HEK293 (cell line): ENCODE measurements at regions of chr2 and their contacts with region 1.

Region 1: GRCh38 chr2:112884869-112885505 is 26.0 kb upstream of the IL37 start:
- H3K4me3 ChIP-seq: no peak overlapping the region
- H3K27ac ChIP-seq: no peak overlapping the region
- H3K4me1 ChIP-seq: peaks cover 2% of the 10 kb centered on the region; the same call in 1 of the 2 replicates
- CTCF ChIP-seq: peak; percentile 48

Region 2: DNA sequence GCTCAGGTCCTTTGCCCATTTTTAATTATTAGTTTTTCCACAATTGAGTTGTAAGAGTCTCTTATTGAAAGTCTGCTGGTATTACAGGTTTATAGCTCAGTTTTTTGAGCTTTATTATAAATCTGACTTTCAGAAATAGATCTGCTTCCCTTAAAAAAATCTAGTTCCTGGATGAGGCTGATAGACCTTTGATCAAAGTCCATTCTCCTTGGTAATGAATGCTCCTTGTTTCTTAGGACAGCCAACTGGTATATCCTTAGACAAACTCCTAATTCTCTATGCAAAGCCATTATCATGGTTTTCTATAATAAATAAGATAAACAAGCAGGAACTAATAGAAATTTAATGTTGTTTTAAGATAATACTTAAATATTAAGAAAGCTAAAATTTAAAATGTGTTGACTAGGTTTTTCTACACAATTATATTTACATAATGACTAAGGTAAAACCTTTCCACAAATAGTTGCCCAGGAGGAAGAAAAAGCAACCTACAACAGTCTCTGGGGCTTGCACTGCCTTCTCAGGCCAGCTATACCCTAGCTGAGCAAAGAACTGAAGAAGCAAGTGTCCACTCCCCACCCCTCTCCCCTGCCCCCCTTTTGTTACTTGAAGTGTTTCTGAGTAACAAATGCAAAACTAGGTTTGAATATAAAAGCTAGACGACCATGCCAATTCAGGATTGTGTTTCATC is 147.3 kb before region 1 on chr2:
- CTCF ChIA-PET with region 1: interaction called, 15 read pairs
- POLR2A ChIA-PET with region 1: no interaction called
- H3K4me3 ChIP-seq: no peak overlapping the region
- H3K27ac ChIP-seq: no peak overlapping the region
- H3K4me1 ChIP-seq: no peaks in the 10 kb centered on the region
- CTCF ChIP-seq: no peak

Region 3: DNA sequence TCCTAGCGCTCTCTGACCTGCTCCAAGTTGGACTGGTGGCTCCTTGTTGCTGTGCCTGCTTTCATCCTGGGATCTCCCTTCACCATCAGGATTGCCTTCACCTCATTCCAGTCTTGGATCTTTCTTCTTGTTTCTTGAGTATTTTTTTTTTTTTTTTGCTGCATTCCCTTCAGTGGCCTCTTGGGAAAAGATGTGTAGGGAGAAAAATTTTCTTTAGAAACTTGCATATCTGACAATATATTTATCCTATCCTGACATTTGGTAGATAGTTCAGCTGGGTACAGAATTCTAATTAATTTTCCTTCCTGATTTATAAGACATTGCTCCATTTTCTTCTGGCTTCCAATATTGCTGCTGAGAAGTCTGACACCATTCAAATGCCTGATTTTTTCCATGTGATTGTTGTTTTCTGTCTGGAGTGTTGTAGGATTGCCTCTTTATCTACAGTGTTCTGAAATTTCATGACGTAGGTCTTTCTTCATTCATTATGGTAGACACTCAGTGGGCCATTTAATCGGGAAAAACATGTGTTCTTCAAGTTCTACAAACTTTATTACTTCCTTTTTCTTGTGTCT is 77.7 kb before region 1 on chr2:
- CTCF ChIA-PET with region 1: no interaction called
- POLR2A ChIA-PET with region 1: no interaction called
- H3K4me3 ChIP-seq: no peak overlapping the region
- H3K27ac ChIP-seq: no peak overlapping the region
- H3K4me1 ChIP-seq: no peaks in the 10 kb centered on the region
- CTCF ChIP-seq: no peak

Region 4: GRCh38 chr2:112869258-112869885 is 15.6 kb before region 1 on chr2:
- CTCF ChIA-PET with region 1: interaction called, 14 read pairs
- POLR2A ChIA-PET with region 1: no interaction called
- H3K4me3 ChIP-seq: no peak overlapping the region
- H3K27ac ChIP-seq: peak overlapping the region; percentile 43; the same call in 1 of the 2 replicates
- H3K4me1 ChIP-seq: peaks cover 11% of the 10 kb centered on the region
- CTCF ChIP-seq: no peak

Region 5: GRCh38 chr2:112902816-112903215 is 17.8 kb after region 1 on chr2:
- CTCF ChIA-PET with region 1: interaction called, 10 read pairs
- POLR2A ChIA-PET with region 1: no interaction called
- H3K4me3 ChIP-seq: no peak overlapping the region
- H3K27ac ChIP-seq: no peak overlapping the region
- H3K4me1 ChIP-seq: no peaks in the 10 kb centered on the region
- CTCF ChIP-seq: no peak